ENCODE measurements at regions of chr3 and their contacts with region 1.

Region 1: GRCh38 chr3:189270248-189270832 is 98.6 kb downstream of the TPRG1 start:
- DNase-seq: no peak
- ATAC-seq: peak; percentile 93
- H3K4me3 ChIP-seq: no peak overlapping the region
- H3K27ac ChIP-seq: no peak overlapping the region
- H3K4me1 ChIP-seq: no peaks in the 10 kb centered on the region; the same call in 1 of the 2 replicates
- H3K27me3 ChIP-seq: no peaks in the 10 kb centered on the region; a peak in 1 of 4 replicates
- CTCF ChIP-seq: peak; percentile 72 to 77 (median 75)
- EP300 ChIP-seq: no peak
- POLR2A ChIP-seq: no peak
- RAD21 ChIP-seq: peak; percentile 96

Region 2: DNA sequence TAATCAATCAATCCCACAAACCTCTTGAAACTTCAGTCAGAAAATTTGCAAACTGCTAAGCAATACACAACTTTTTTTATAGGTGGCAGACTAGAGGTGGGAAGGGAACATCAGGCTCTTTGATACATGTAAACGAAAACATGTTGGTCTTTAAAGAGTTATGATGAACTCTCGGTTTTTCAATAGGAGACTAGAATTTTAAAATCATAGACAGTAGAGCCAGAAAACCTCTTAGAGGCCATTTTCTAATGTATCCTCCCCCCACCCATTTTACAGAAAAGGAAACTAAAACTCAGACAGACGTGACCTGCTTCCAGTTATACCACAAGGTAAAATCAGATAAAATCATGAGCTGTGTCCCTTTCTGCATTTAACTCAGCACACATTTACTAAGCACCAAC is 1295.5 kb before region 1 on chr3:
- CTCF ChIA-PET with region 1: no interaction called
- POLR2A ChIA-PET with region 1: no interaction called
- RAD21 ChIA-PET with region 1: no interaction called
- SMC1A ChIA-PET with region 1: no interaction called
- in situ Hi-C with region 1: no loop called
- intact Hi-C with region 1: no loop called
- DNase-seq: no peak
- ATAC-seq: peak; percentile 55
- H3K4me3 ChIP-seq: peak overlapping the region; percentile 16
- H3K27ac ChIP-seq: no peak overlapping the region
- H3K4me1 ChIP-seq: peaks cover 14% of the 10 kb centered on the region
- H3K27me3 ChIP-seq: peaks cover 2 to 4% of the 10 kb centered on the region in 2 experiments; a peak in 3 of 4 replicates
- CTCF ChIP-seq: no peak; a peak in 1 of 6 replicates
- EP300 ChIP-seq: no peak
- POLR2A ChIP-seq: no peak
- RAD21 ChIP-seq: no peak

Region 3: GRCh38 chr3:189027626-189028155 is 242.6 kb before region 1 on chr3:
- CTCF ChIA-PET with region 1: no interaction called
- POLR2A ChIA-PET with region 1: no interaction called
- RAD21 ChIA-PET with region 1: no interaction called
- SMC1A ChIA-PET with region 1: no interaction called
- in situ Hi-C with region 1: no loop called
- intact Hi-C with region 1: no loop called
- DNase-seq: no peak
- ATAC-seq: no peak
- H3K4me3 ChIP-seq: no peak overlapping the region
- H3K27ac ChIP-seq: no peak overlapping the region
- H3K4me1 ChIP-seq: no peaks in the 10 kb centered on the region
- H3K27me3 ChIP-seq: no peaks in the 10 kb centered on the region
- CTCF ChIP-seq: no peak
- EP300 ChIP-seq: no peak
- POLR2A ChIP-seq: no peak
- RAD21 ChIP-seq: no peak

Region 4: GRCh38 chr3:189288348-189289235 is 18.3 kb after region 1 on chr3:
- CTCF ChIA-PET with region 1: interaction called, 21 read pairs
- POLR2A ChIA-PET with region 1: no interaction called
- RAD21 ChIA-PET with region 1: interaction called, 4 read pairs
- SMC1A ChIA-PET with region 1: interaction called, 17 read pairs
- in situ Hi-C with region 1: no loop called
- intact Hi-C with region 1: no loop called
- DNase-seq: peak; percentile 73
- ATAC-seq: peak; percentile 90
- H3K4me3 ChIP-seq: peak overlapping the region; percentile 60
- H3K27ac ChIP-seq: peak overlapping the region; percentile 72
- H3K4me1 ChIP-seq: peaks cover 31% of the 10 kb centered on the region
- H3K27me3 ChIP-seq: peaks cover 0 to 2% of the 10 kb centered on the region in 2 experiments; a peak in 1 of 4 replicates
- CTCF ChIP-seq: no peak
- EP300 ChIP-seq: peak; percentile 58 to 70; a peak in 3 of 4 replicates
- POLR2A ChIP-seq: no peak
- RAD21 ChIP-seq: peak; percentile 10; the same call in 1 of the 2 replicates

Region 5: DNA sequence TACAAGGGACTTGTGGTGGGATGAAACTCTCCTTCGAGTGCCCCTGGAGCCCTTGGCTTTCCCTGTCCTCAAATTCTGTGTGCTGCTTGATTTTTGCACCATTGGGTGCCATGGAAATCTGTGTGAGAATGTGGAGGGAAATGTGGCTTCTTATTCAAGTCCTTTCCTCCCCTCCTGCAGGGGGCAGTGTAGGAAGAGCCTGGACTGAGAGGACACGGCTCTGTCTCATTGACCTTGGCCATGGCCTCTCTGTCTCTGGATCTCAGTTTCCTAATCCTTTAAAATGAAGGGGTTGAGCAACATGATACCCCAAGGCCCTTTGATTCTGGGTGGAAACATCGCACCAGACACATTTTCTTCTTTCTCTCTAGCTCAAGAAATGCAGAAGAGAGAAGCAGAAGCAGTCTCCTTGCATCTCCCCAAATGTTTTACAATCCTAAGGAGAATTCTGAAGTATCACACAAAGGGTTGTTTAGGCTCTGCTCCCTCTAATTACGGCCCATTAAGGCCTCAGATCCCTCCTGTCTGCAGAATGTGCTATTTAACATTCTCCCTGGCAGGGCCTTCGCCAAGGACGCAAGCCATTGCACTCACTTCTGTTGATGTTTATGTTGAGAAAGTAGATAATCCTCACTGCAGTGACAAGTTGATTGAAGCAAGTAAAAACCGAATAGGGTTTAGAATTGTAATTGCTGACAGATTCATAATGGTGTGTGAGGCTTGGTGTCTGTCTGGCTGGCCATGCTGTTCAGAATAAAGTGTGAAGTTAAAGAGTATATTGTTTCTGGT is 70.5 kb after region 1 on chr3:
- CTCF ChIA-PET with region 1: interaction called, 19 read pairs
- POLR2A ChIA-PET with region 1: no interaction called
- RAD21 ChIA-PET with region 1: no interaction called
- SMC1A ChIA-PET with region 1: interaction called, 7 read pairs
- in situ Hi-C with region 1: no loop called
- intact Hi-C with region 1: no loop called
- DNase-seq: no peak
- ATAC-seq: peak; percentile 68
- H3K4me3 ChIP-seq: no peak overlapping the region
- H3K27ac ChIP-seq: no peak overlapping the region
- H3K4me1 ChIP-seq: no peaks in the 10 kb centered on the region
- H3K27me3 ChIP-seq: no peaks in the 10 kb centered on the region
- CTCF ChIP-seq: peak; percentile 44 to 47 (median 45)
- EP300 ChIP-seq: no peak
- POLR2A ChIP-seq: no peak
- RAD21 ChIP-seq: peak; percentile 49

Region 6: DNA sequence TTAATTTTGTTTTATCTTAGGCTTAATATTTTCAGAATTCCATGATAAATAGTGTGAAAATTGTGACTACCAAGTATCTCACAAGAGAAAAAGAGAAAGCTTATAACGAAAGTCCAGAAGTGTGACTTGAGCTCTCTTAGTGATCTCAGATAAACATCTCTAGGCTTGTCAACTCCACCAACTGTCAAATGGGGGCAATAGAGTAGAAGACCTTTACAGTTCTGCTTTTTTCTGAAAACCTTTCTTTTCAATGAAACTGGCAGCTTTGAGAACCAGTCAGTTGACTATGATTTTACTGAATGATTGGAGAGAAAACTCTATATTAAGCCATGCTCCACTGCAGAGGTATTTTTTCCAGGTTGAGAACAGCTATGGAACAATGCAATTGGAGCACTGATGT is 241.7 kb after region 1 on chr3:
- CTCF ChIA-PET with region 1: interaction called, 23 read pairs
- POLR2A ChIA-PET with region 1: no interaction called
- RAD21 ChIA-PET with region 1: interaction called, 43 read pairs
- SMC1A ChIA-PET with region 1: interaction called, 29 read pairs
- in situ Hi-C with region 1: no loop called
- intact Hi-C with region 1: loop called (anchors 5 kb)
- DNase-seq: no peak
- ATAC-seq: peak; percentile 74
- H3K4me3 ChIP-seq: no peak overlapping the region
- H3K27ac ChIP-seq: no peak overlapping the region
- H3K4me1 ChIP-seq: peaks cover 10% of the 10 kb centered on the region; the same call in 1 of the 2 replicates
- H3K27me3 ChIP-seq: no peaks in the 10 kb centered on the region
- CTCF ChIP-seq: peak; percentile 19 to 46 (median 34); a peak in 5 of 6 replicates
- EP300 ChIP-seq: no peak
- POLR2A ChIP-seq: no peak
- RAD21 ChIP-seq: peak; percentile 85

Region 7: GRCh38 chr3:189941679-189942078 is 671.3 kb after region 1 on chr3:
- CTCF ChIA-PET with region 1: interaction called, 288 read pairs
- POLR2A ChIA-PET with region 1: no interaction called
- RAD21 ChIA-PET with region 1: interaction called, 195 read pairs
- SMC1A ChIA-PET with region 1: interaction called, 213 read pairs
- in situ Hi-C with region 1: no loop called
- intact Hi-C with region 1: no loop called
- DNase-seq: no peak
- ATAC-seq: no peak
- H3K4me3 ChIP-seq: no peak overlapping the region
- H3K27ac ChIP-seq: no peak overlapping the region
- H3K4me1 ChIP-seq: no peaks in the 10 kb centered on the region
- H3K27me3 ChIP-seq: no peaks in the 10 kb centered on the region
- CTCF ChIP-seq: no peak
- EP300 ChIP-seq: no peak
- POLR2A ChIP-seq: no peak
- RAD21 ChIP-seq: no peak

Region 8: GRCh38 chr3:189954733-189955132 is 684.4 kb after region 1 on chr3:
- CTCF ChIA-PET with region 1: interaction called, 288 read pairs
- POLR2A ChIA-PET with region 1: no interaction called
- RAD21 ChIA-PET with region 1: interaction called, 195 read pairs
- SMC1A ChIA-PET with region 1: interaction called, 213 read pairs
- in situ Hi-C with region 1: loop called (anchors 5 kb)
- intact Hi-C with region 1: no loop called
- DNase-seq: no peak
- ATAC-seq: no peak
- H3K4me3 ChIP-seq: no peak overlapping the region
- H3K27ac ChIP-seq: no peak overlapping the region
- H3K4me1 ChIP-seq: no peaks in the 10 kb centered on the region
- H3K27me3 ChIP-seq: no peaks in the 10 kb centered on the region; a peak in 1 of 4 replicates
- CTCF ChIP-seq: no peak
- EP300 ChIP-seq: no peak
- POLR2A ChIP-seq: no peak
- RAD21 ChIP-seq: no peak

Measured in GM12878 (cell line).